ENCODE measurements at regions of chr12 and their contacts with region 1.

Region 1: DNA sequence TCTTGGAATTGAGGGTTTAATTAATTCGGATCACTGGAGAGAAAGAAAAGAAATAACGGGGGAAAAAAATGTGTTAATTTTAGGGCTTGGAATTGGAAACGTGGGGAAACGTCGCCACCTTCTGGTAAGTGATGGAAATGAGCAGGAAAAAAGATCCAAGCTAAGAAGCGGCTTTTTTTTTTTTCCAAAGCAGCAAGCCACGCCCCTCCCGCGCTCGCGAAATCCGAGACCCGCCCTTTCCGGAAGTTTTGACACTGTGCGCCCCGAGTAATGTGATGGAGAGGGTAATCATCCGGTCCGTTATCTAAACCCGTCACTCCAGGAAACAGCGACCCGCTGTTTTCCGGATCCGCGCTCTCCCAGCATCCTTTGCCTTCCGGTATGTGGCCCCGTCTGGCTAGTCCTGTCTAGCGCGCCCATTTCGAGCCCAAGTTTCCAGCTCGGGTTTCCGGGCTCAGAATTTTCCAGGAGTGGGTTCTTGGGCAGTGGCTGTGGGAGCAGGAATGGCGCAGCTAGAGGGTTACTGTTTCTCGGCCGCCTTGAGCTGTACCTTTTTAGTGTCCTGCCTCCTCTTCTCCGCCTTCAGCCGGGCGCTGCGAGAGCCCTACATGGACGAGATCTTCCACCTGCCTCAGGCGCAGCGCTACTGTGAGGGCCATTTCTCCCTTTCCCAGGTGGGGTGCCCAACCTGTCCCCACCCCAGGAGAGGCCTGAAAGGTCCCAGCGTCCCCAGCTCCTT is at the start of gene ALG10B:
- DNase-seq: peak; percentile 77 to 97
- H3K4me3 ChIP-seq: peak within 1 kb of the TSS; percentile 35 to 78
- H3K27ac ChIP-seq: peak within 1 kb of the TSS; percentile 73 to 82
- H3K4me1 ChIP-seq: peaks cover 0 to 5% of the 10 kb centered on the region in 2 donors
- H3K27me3 ChIP-seq: no peaks in the 10 kb centered on the region
- CTCF ChIP-seq: peak in 2 of 3 experiments; percentile 60 to 71
- total RNA-seq, gene ALG10B: 9.2 TPM

Region 2: DNA sequence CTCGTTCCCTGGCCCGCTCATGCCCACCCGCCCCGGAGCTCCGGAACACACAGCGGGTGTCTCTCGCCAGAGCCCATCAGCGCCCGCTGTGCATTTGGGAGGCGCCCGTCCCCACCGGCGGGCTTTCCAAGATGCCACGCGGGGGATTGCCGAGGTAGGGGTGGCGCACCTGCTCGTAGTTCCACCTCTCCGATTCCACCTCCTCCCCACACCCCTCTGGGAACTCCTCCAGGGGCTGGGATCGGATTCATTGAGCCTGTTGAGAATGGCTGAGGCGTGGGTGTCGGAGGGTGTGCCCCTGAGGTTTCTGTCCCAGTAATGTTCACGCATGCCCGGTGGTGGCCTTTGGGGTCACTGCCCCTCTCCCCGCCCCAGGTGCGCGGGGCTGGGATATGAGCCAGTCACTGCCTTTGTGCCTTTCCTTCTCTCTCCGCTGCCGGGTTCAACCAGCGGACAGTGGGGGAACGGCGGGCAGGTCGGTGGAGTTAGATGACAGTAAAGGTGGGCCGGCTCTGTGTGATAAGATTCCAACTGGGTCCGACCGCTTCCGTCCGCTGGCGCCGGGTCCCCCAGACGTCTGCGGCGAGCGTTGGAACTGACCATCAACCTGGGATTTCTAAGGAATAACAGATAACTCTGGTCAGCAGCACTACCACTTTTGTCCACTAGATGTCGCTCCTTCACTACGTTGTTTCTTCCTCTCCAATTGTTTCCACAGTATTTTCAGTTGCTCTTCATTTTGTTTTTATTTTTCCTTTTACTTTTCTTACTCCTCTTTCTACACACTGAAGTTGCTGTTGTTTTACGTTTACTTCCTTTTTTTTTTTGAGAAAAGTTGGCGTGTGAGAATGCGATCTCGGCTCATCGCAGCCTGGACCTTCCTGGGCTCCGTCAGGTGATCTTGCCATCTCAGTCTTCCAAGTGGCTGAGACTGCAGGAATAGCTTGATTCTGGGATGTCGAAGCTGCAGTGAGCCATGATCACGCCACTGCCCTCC is 178.0 kb before region 1 on chr12:
- intact Hi-C with region 1: loop called (anchors 1 kb)
- DNase-seq: peak in 1 of 2 donors; percentile 85
- H3K4me3 ChIP-seq: peak overlapping the region; percentile 37 to 53
- H3K27ac ChIP-seq: no peak overlapping the region
- H3K4me1 ChIP-seq: peaks cover 0 to 6% of the 10 kb centered on the region in 2 donors
- H3K27me3 ChIP-seq: no peaks in the 10 kb centered on the region
- CTCF ChIP-seq: peak; percentile 76 to 96 (median 95)

Region 3: DNA sequence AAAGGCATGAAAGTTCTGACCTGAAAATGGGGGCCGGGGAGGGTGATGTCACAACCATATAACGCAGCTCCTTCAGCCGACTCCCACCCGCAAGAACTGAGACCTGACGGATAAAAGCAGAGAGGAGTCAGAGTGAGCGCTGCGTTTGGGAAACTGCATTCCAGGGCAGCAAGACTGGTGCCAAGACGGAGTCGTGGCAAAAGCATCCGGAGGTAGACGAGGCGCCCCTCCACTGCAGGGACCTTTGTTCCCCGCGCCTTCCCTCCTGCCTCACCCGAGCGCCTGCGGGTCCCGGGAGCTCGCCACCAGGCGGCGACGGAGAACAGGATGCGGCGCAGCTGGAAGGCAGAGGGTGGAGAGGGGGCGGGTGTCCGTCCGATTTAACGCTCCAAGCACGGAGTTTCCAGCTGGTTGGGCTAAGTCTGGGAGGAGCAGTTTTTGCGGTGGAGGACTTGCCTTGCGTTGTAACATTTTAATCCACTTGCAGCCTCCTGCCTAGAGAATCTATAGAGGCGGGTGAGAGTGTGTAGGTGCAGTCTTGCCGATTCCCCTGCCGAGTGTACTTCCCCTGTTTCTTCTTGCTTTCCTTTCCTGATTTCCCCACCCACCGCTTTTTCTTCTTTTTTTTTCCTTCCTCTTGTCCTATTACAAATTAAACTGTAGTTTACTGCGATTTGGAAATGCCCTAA is 590.1 kb after region 1 on chr12:
- intact Hi-C with region 1: loop called (anchors 5 kb)
- DNase-seq: peak; percentile 19 to 93
- H3K4me3 ChIP-seq: peak overlapping the region; percentile 55 to 94
- H3K27ac ChIP-seq: peak overlapping the region; percentile 98 to 99
- H3K4me1 ChIP-seq: peaks cover 4 to 7% of the 10 kb centered on the region in 2 donors
- H3K27me3 ChIP-seq: no peaks in the 10 kb centered on the region
- CTCF ChIP-seq: peak; percentile 74 to 93 (median 90)